ENCODE measurements at regions of chr7 and their contacts with region 1.

Region 1: DNA sequence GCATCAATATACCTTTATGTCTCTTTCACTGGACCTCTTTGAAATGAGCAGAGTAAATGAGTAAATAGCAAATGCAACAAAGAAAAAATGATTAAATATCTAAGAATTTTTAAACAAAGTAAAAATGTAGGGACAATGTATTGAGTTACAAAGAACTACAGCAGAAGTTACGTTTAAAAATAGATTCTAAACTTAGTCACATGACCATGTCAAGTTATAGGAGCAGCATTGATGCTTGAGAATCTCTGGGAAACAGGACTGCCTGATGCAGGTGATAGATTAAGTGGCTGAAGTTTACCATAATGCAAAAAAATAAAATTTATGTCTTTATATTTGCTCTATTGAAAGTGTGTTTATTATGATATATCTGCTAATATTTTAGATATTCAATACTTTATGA is 95.7 kb upstream of the PPP1R3A start:
- DNase-seq: no peak
- ATAC-seq: no peak
- H3K4me3 ChIP-seq: no peak overlapping the region
- H3K27ac ChIP-seq: no peak overlapping the region
- H3K4me1 ChIP-seq: no peaks in the 10 kb centered on the region
- H3K27me3 ChIP-seq: no peaks in the 10 kb centered on the region
- CTCF ChIP-seq: no peak

Region 2: DNA sequence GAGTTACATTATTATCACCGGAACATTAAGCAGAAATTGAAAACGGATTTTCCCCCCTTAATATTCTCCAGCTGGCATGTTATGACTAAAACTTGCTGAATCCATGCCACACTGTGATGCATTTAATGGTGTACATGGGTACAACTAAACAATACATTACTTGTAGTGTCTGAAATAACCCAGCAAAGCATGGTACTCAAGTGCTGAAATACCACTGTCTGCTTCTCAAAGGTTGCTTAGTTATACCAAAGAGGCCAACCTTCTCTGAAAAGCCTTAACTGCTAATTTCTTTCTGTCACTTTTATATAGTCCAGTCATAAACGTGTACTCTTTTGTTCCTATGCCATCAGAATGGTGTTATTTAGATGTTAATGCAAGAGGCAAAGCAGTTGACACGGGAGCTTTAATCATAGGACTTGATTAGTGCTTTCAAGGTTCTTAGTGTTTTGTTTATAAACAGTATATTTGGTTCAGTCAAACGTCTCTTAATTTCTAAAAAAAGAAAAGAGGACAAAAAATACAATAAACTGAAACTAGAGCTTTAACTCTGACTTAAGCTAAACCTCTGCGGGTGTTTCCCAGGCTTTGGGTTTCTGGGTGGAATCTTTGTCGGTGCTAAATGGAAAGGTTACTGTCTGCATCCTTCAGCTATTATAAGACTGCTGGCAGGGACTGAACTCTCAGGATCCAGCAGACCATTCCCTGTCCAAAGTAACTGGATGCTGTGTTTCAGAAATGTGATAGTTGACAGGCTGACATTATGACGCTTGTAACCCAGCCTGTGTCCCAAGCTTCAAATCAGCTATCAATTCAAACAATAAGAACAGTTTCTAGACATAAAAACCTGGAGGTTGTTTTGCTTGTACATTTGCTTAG is 298.3 kb before region 1 on chr7:
- CTCF ChIA-PET with region 1: no interaction called
- POLR2A ChIA-PET with region 1: no interaction called
- in situ Hi-C with region 1: no loop called
- intact Hi-C with region 1: no loop called
- DNase-seq: no peak
- ATAC-seq: no peak
- H3K4me3 ChIP-seq: no peak overlapping the region
- H3K27ac ChIP-seq: no peak overlapping the region
- H3K4me1 ChIP-seq: no peaks in the 10 kb centered on the region
- H3K27me3 ChIP-seq: no peaks in the 10 kb centered on the region
- CTCF ChIP-seq: no peak

Region 3: DNA sequence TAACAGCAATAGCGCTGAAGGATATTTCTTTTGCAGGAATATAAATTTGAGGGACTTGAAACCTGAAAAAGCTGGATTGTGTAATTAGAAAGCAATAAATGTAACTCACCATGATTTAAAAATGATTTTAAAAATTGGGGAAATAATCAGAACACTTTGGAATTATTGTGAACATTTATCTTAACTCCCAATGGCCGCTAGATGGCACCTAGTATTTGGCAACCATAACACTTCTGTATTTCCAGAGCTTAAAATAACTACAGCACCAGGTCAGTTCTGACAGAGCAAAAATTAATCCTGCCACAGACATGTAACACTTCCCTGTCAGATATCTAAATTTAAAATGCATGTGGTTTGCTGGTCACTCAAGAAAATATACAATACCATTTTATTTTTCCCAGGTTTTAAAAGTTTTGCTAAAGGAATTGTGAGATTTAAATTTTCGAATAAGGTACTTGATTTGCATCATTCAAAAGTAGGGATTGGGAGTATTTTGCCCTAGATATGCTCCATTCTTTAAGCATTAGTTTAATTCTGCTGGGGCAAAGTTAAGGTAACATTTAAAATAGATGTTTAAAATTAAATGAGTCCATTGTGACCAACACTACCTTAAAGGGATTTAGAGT is 240.2 kb before region 1 on chr7:
- CTCF ChIA-PET with region 1: no interaction called
- POLR2A ChIA-PET with region 1: no interaction called
- in situ Hi-C with region 1: no loop called
- intact Hi-C with region 1: loop called (anchors 10 kb)
- DNase-seq: peak; percentile 10
- ATAC-seq: peak; percentile 71; the same call in 1 of the 2 replicates
- H3K4me3 ChIP-seq: no peak overlapping the region
- H3K27ac ChIP-seq: no peak overlapping the region
- H3K4me1 ChIP-seq: no peaks in the 10 kb centered on the region
- H3K27me3 ChIP-seq: no peaks in the 10 kb centered on the region
- CTCF ChIP-seq: peak; percentile 76; the same call in 1 of the 2 replicates

Measured in Panc1 (cell line).